CD4-positive, alpha-beta T cell (primary cell): ENCODE measurements at regions of chr5 and their contacts with region 1.

Region 1: GRCh38 chr5:62403434-62404250 is at the start of gene DIMT1:
- DNase-seq: peak; percentile 83 to 96 (median 88)
- ATAC-seq: peak; percentile 97
- H3K4me3 ChIP-seq: peak within 1 kb of the TSS; percentile 95
- H3K4me3 Mint-ChIP-seq: peak within 1 kb of the TSS; percentile 97
- H3K27ac ChIP-seq: peak within 1 kb of the TSS; percentile 91 to 96
- H3K27ac Mint-ChIP-seq: peak within 1 kb of the TSS; percentile 89
- H3K4me1 ChIP-seq: peaks cover 4% of the 10 kb centered on the region
- H3K4me1 Mint-ChIP-seq: peaks cover 31% of the 10 kb centered on the region
- H3K27me3 ChIP-seq: no peaks in the 10 kb centered on the region
- H3K27me3 Mint-ChIP-seq: no peaks in the 10 kb centered on the region
- CTCF ChIP-seq: no peak
- total RNA-seq, gene DIMT1: 19.9 to 20.5 TPM

Region 2: GRCh38 chr5:62322484-62322883 is 81.2 kb before region 1 on chr5:
- CTCF ChIA-PET with region 1: no interaction called
- POLR2A ChIA-PET with region 1: no interaction called
- intact Hi-C with region 1: no loop called
- DNase-seq: no peak
- ATAC-seq: no peak
- H3K4me3 ChIP-seq: no peak overlapping the region
- H3K4me3 Mint-ChIP-seq: no peak overlapping the region
- H3K27ac ChIP-seq: no peak overlapping the region
- H3K27ac Mint-ChIP-seq: no peak overlapping the region
- H3K4me1 ChIP-seq: peaks cover 22% of the 10 kb centered on the region
- H3K4me1 Mint-ChIP-seq: peaks cover 83% of the 10 kb centered on the region
- H3K27me3 ChIP-seq: no peaks in the 10 kb centered on the region
- H3K27me3 Mint-ChIP-seq: no peaks in the 10 kb centered on the region
- CTCF ChIP-seq: no peak

Region 3: GRCh38 chr5:62385131-62385530 is 18.5 kb before region 1 on chr5:
- CTCF ChIA-PET with region 1: no interaction called
- POLR2A ChIA-PET with region 1: interaction called, 14 read pairs
- intact Hi-C with region 1: no loop called
- DNase-seq: no peak
- ATAC-seq: no peak
- H3K4me3 ChIP-seq: no peak overlapping the region
- H3K4me3 Mint-ChIP-seq: no peak overlapping the region
- H3K27ac ChIP-seq: no peak overlapping the region
- H3K27ac Mint-ChIP-seq: peak overlapping the region; percentile 26
- H3K4me1 ChIP-seq: no peaks in the 10 kb centered on the region
- H3K4me1 Mint-ChIP-seq: no peaks in the 10 kb centered on the region
- H3K27me3 ChIP-seq: no peaks in the 10 kb centered on the region
- H3K27me3 Mint-ChIP-seq: no peaks in the 10 kb centered on the region
- CTCF ChIP-seq: no peak

Region 4: DNA sequence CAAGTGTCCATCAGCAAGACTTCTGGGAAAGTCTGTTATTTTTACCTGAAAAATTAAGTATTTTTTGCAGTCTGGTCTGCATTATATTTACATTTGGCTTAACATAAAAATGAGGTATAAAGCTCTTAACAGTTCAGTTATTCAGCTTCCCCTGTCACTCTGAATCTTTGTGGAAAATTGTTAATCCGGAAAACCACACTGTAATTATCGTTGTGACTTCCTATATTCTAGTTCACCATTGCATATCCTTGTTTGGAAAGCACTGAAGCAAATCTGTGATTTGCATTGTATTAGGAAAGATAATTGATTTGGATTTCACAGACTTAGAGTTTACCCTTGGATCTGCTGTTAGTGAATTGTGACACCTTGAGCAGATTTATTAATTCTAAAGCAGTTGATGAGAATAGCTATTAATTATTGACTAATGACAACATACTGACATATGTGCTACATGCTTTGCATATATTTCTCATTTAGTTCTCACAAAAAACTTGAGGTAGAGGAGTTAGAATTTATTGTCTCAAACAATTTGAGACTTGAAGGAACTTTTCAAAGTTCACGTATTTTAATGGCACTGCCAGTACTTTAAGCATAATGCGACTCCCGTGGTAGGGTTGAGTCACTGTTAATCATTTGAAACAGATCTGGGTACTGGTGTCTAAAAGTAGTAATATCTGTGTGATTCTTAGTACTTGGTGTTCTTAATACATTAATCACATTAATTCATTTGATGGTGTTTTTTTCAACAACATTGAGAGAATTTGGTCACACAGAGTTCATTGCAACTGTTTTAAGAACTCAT is 103.2 kb after region 1 on chr5:
- CTCF ChIA-PET with region 1: no interaction called
- POLR2A ChIA-PET with region 1: no interaction called
- intact Hi-C with region 1: no loop called
- DNase-seq: no peak
- ATAC-seq: no peak
- H3K4me3 ChIP-seq: no peak overlapping the region
- H3K4me3 Mint-ChIP-seq: no peak overlapping the region
- H3K27ac ChIP-seq: no peak overlapping the region
- H3K27ac Mint-ChIP-seq: no peak overlapping the region
- H3K4me1 ChIP-seq: no peaks in the 10 kb centered on the region
- H3K4me1 Mint-ChIP-seq: no peaks in the 10 kb centered on the region
- H3K27me3 ChIP-seq: no peaks in the 10 kb centered on the region
- H3K27me3 Mint-ChIP-seq: no peaks in the 10 kb centered on the region
- CTCF ChIP-seq: no peak

Region 5: DNA sequence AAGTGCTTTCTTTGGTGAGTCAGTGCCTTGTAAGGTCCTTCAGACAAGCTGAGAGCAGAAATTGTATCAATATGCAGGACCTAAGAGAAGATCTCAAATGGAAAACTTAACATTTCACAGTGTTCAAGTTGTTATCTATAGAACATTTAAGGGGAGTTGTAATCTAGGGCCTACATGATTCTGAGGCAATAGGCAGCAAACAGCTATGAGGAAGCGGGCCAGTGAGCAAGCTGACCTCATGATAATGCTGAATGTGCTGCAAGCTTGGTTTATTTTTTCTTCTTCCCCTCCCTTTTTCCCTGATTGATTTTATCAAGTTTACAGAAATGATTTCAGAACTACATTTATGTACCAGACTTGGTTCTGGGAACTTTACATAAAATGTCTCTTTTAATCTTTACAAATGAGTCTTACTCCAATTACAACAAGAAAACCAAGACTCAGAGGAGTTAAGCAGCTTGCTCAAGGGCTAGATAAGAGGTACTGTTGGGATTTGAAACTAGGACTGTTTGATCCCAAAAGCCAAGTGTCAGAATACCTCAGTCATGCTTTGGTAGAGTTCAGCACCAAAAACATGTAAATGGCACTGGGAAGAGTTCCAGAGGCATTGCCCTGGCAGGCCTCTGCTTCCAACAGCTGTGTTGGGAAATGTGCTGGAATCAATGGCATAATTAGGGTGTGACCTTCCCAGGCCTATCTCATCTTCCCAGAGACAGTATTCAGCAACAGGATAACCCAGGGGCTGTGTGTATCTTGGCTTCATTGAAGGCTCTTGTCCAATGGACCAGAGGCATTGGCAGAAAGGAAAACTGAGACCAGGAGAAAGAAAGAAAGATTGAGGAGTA is 305.1 kb after region 1 on chr5:
- CTCF ChIA-PET with region 1: no interaction called
- POLR2A ChIA-PET with region 1: no interaction called
- intact Hi-C with region 1: no loop called
- DNase-seq: no peak
- ATAC-seq: no peak
- H3K4me3 ChIP-seq: no peak overlapping the region
- H3K4me3 Mint-ChIP-seq: no peak overlapping the region
- H3K27ac ChIP-seq: no peak overlapping the region
- H3K27ac Mint-ChIP-seq: no peak overlapping the region
- H3K4me1 ChIP-seq: no peaks in the 10 kb centered on the region
- H3K4me1 Mint-ChIP-seq: no peaks in the 10 kb centered on the region
- H3K27me3 ChIP-seq: no peaks in the 10 kb centered on the region
- H3K27me3 Mint-ChIP-seq: no peaks in the 10 kb centered on the region
- CTCF ChIP-seq: no peak